ENCODE measurements at regions of chr13 and their contacts with region 1.

Region 1: GRCh38 chr13:39462428-39462827 is 140.6 kb downstream of the LHFPL6 start:
- DNase-seq: no peak
- ATAC-seq: peak; percentile 78

Region 2: GRCh38 chr13:39484506-39485313 is 22.3 kb after region 1 on chr13:
- intact Hi-C with region 1: loop called (anchors 1 kb)
- DNase-seq: no peak
- ATAC-seq: no peak

Region 3: GRCh38 chr13:39516096-39516495 is 53.7 kb after region 1 on chr13:
- intact Hi-C with region 1: loop called (anchors 5 kb)
- DNase-seq: no peak
- ATAC-seq: peak; percentile 90

Region 4: DNA sequence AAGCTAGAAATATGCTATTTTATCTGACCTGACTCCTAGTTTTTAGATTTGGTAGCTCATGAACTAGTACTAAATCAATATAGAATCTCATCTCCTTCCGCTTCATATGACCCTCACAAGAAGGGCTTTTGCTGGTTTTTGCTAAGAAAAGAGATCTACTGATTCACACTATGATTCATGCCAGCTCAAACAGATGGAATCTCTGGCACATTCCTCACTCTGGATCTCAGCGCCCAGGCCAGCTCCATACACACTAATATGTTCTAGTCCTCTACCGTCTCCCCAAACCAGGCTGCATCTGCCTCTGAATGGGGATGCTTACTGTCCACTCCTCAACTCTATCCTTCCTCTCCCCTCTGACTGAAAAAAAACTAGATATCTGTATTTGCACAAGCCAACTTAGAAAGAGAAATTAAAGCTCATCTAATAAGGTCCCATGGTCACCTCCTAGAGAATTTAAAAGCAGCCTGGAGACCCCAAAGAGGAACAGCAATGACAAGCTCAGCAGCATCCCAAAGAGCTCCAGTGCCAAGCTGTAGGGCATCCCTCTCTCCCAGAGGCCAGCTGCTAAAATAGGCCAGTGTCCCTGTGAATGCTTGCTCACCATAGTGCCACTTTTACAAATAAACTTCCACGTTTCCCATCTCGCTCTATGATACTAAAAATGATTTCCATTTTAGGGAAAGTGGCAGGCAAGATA is 65.7 kb after region 1 on chr13:
- intact Hi-C with region 1: no loop called
- DNase-seq: no peak
- ATAC-seq: peak; percentile 49